ENCODE measurements at regions of chr6 and their contacts with region 1.

Region 1: GRCh38 chr6:22471132-22471690 is 98.2 kb upstream of the HDGFL1 start:
- DNase-seq: peak; percentile 43
- H3K4me3 ChIP-seq: no peak overlapping the region
- H3K27ac ChIP-seq: no peak overlapping the region
- H3K4me1 ChIP-seq: no peaks in the 10 kb centered on the region
- H3K27me3 ChIP-seq: no peaks in the 10 kb centered on the region
- CTCF ChIP-seq: peak; percentile 6 to 44

Region 2: GRCh38 chr6:22145823-22146677 is 325.2 kb before region 1 on chr6:
- CTCF ChIA-PET with region 1: interaction called, 3 read pairs
- dilution Hi-C with region 1: no loop called
- in situ Hi-C with region 1: no loop called
- intact Hi-C with region 1: loop called (anchors 10 kb)
- DNase-seq: peak; percentile 17
- H3K4me3 ChIP-seq: no peak overlapping the region
- H3K27ac ChIP-seq: no peak overlapping the region
- H3K4me1 ChIP-seq: peaks cover 5% of the 10 kb centered on the region
- H3K27me3 ChIP-seq: no peaks in the 10 kb centered on the region
- CTCF ChIP-seq: peak in 1 of 2 donors; percentile 42

Region 3: DNA sequence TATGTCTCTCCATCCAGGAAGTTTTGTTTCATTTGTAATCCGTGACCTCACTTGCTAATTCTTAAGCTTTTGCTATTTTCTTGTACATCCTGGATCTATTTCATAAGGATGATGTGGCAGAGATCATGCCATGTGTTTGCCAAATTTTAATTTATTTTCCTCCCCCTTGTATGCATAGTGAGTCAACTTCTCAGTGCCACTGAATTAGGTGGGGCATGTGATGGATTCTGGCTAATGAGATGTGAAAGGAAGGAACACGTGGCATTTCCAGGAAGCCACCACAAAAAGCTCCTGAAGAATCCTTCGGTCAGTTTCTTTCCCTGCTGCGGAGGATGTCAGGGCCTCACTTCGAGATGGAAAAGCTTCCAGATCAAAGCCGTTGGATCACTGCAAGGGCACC is 88.2 kb before region 1 on chr6:
- CTCF ChIA-PET with region 1: no interaction called
- dilution Hi-C with region 1: no loop called
- in situ Hi-C with region 1: no loop called
- intact Hi-C with region 1: no loop called
- DNase-seq: no peak
- H3K4me3 ChIP-seq: no peak overlapping the region
- H3K27ac ChIP-seq: no peak overlapping the region
- H3K4me1 ChIP-seq: no peaks in the 10 kb centered on the region
- H3K27me3 ChIP-seq: no peaks in the 10 kb centered on the region
- CTCF ChIP-seq: no peak

Region 4: DNA sequence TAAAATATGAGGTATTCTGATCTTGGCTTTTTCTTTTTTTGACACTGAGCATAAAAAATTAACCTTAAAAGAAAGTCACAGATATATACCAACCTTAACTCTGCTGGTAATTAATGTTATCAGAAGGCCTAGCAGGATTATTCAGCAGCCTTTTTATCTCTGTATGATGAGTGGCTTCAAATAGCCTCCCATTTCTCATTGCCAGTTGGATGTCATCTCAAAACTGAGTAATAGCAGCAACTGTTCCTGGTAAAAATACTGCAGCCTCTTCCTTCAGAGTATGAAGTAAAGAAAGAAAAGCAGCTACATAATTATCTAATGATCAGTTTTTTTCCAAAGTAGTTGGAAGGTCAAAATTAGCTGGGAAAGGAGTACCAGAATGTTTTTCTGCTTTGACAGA is 73.3 kb after region 1 on chr6:
- CTCF ChIA-PET with region 1: no interaction called
- dilution Hi-C with region 1: loop called (anchors 5 kb)
- in situ Hi-C with region 1: no loop called
- intact Hi-C with region 1: no loop called
- DNase-seq: no peak
- H3K4me3 ChIP-seq: no peak overlapping the region
- H3K27ac ChIP-seq: no peak overlapping the region
- H3K4me1 ChIP-seq: no peaks in the 10 kb centered on the region
- H3K27me3 ChIP-seq: no peaks in the 10 kb centered on the region
- CTCF ChIP-seq: no peak

Region 5: GRCh38 chr6:22598339-22598738 is 127.1 kb after region 1 on chr6:
- CTCF ChIA-PET with region 1: no interaction called
- dilution Hi-C with region 1: no loop called
- in situ Hi-C with region 1: no loop called
- intact Hi-C with region 1: no loop called
- DNase-seq: no peak
- H3K4me3 ChIP-seq: no peak overlapping the region
- H3K27ac ChIP-seq: no peak overlapping the region
- H3K4me1 ChIP-seq: no peaks in the 10 kb centered on the region
- H3K27me3 ChIP-seq: no peaks in the 10 kb centered on the region
- CTCF ChIP-seq: no peak

Measured in mammary epithelial cell (primary cell).